ENCODE measurements at regions of chr20 and their contacts with region 1.

Region 1: DNA sequence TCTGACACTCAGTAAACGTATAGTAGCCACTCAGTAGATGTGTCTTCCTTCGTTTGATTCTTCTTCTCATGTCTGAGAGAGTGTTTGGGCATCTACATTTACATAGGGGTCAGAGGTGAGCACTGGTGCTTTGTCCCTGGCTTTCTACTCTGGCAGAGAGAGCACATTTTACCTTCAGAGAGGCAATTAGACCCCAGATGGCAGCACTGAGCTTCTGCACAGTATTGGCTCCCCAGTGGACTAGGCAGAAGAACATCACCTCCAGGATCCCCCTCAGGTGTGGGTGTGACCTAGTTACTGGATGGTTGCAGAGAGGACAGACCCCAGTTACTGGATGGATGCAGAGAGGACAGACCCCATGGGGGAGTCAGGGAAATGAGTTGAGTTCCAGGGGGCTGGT is 327.2 kb downstream of the DHX35 start:
- DNase-seq: no peak
- ATAC-seq: peak; percentile 47
- H3K4me3 Mint-ChIP-seq: no peak overlapping the region
- H3K27ac Mint-ChIP-seq: no peak overlapping the region
- H3K4me1 Mint-ChIP-seq: peaks cover 2% of the 10 kb centered on the region
- H3K27me3 Mint-ChIP-seq: no peaks in the 10 kb centered on the region
- CTCF ChIP-seq: no peak

Region 2: DNA sequence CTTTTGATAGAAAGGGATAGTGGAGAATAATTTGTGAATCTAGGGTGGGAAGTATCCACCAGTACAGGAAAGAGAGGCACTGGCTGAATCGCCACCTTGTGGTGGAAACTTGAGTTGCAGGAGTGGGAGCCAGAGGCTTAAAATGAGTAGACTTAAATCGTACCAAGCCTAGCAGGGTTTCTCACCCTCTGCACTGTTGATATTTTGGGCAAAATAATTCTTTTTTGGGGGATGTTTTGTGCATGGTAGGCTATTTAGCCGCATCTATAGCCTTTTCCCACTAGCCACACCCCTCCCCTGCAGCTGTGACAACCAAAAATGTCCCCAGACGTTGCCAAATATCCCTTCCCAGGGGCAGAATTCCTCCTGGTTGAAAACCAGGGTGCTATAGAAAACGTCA is 208.1 kb before region 1 on chr20:
- CTCF ChIA-PET with region 1: no interaction called
- POLR2A ChIA-PET with region 1: no interaction called
- intact Hi-C with region 1: no loop called
- DNase-seq: peak; percentile 64
- ATAC-seq: peak; percentile 86
- H3K4me3 Mint-ChIP-seq: no peak overlapping the region
- H3K27ac Mint-ChIP-seq: no peak overlapping the region
- H3K4me1 Mint-ChIP-seq: no peaks in the 10 kb centered on the region
- H3K27me3 Mint-ChIP-seq: peaks cover 32% of the 10 kb centered on the region
- CTCF ChIP-seq: peak; percentile 87

Region 3: GRCh38 chr20:39398656-39399055 is 109.3 kb after region 1 on chr20:
- CTCF ChIA-PET with region 1: interaction called, 30 read pairs
- POLR2A ChIA-PET with region 1: no interaction called
- intact Hi-C with region 1: loop called (anchors 1 kb)
- DNase-seq: no peak
- ATAC-seq: no peak
- H3K4me3 Mint-ChIP-seq: no peak overlapping the region
- H3K27ac Mint-ChIP-seq: no peak overlapping the region
- H3K4me1 Mint-ChIP-seq: no peaks in the 10 kb centered on the region
- H3K27me3 Mint-ChIP-seq: peaks cover 7% of the 10 kb centered on the region
- CTCF ChIP-seq: no peak

Region 4: GRCh38 chr20:39429716-39430115 is 140.4 kb after region 1 on chr20:
- CTCF ChIA-PET with region 1: interaction called, 4 read pairs
- POLR2A ChIA-PET with region 1: no interaction called
- intact Hi-C with region 1: loop called (anchors 1 kb)
- DNase-seq: no peak
- ATAC-seq: no peak
- H3K4me3 Mint-ChIP-seq: no peak overlapping the region
- H3K27ac Mint-ChIP-seq: no peak overlapping the region
- H3K4me1 Mint-ChIP-seq: peaks cover 1% of the 10 kb centered on the region
- H3K27me3 Mint-ChIP-seq: no peaks in the 10 kb centered on the region
- CTCF ChIP-seq: no peak

Region 5: GRCh38 chr20:39874049-39874888 is 585.0 kb after region 1 on chr20:
- CTCF ChIA-PET with region 1: interaction called, 31 read pairs
- POLR2A ChIA-PET with region 1: no interaction called
- intact Hi-C with region 1: loop called (anchors 1 kb)
- DNase-seq: peak; percentile 23
- ATAC-seq: peak; percentile 95
- H3K4me3 Mint-ChIP-seq: no peak overlapping the region
- H3K27ac Mint-ChIP-seq: peak overlapping the region; percentile 24
- H3K4me1 Mint-ChIP-seq: peaks cover 9% of the 10 kb centered on the region
- H3K27me3 Mint-ChIP-seq: no peaks in the 10 kb centered on the region
- CTCF ChIP-seq: no peak

Measured in activated B cell treated with CpG ODN at 0.5 μM for 24 hours (primary cell).